PC-9 (cell line): ENCODE measurements at regions of chr6 and their contacts with region 1.

Region 1: GRCh38 chr6:52551401-52552277 is 25.2 kb downstream of the TRAM2 start:
- DNase-seq: peak; percentile 65 to 68
- H3K4me3 ChIP-seq: no peak overlapping the region
- H3K27ac ChIP-seq: no peak overlapping the region
- H3K4me1 ChIP-seq: 0 out of 2 replicates have a peak, but pooled peaks cover 8% of the 10 kb centered on the region
- H3K27me3 ChIP-seq: no peaks in the 10 kb centered on the region
- CTCF ChIP-seq: no peak

Region 2: GRCh38 chr6:52517502-52518278 is 33.9 kb before region 1 on chr6:
- CTCF ChIA-PET with region 1: no interaction called
- POLR2A ChIA-PET with region 1: no interaction called
- intact Hi-C with region 1: loop called (anchors 2 kb)
- DNase-seq: peak; percentile 71 to 76
- H3K4me3 ChIP-seq: no peak overlapping the region
- H3K27ac ChIP-seq: peak overlapping the region; percentile 42
- H3K4me1 ChIP-seq: peaks cover 42% of the 10 kb centered on the region
- H3K27me3 ChIP-seq: no peaks in the 10 kb centered on the region
- CTCF ChIP-seq: no peak

Region 3: GRCh38 chr6:52566853-52567279 is 15.2 kb after region 1 on chr6:
- CTCF ChIA-PET with region 1: interaction called, 7 read pairs
- POLR2A ChIA-PET with region 1: no interaction called
- intact Hi-C with region 1: loop called (anchors 2 kb)
- DNase-seq: peak; percentile 76 to 98
- H3K4me3 ChIP-seq: no peak overlapping the region
- H3K27ac ChIP-seq: peak overlapping the region; percentile 65
- H3K4me1 ChIP-seq: peaks cover 32% of the 10 kb centered on the region
- H3K27me3 ChIP-seq: no peaks in the 10 kb centered on the region
- CTCF ChIP-seq: no peak

Region 4: DNA sequence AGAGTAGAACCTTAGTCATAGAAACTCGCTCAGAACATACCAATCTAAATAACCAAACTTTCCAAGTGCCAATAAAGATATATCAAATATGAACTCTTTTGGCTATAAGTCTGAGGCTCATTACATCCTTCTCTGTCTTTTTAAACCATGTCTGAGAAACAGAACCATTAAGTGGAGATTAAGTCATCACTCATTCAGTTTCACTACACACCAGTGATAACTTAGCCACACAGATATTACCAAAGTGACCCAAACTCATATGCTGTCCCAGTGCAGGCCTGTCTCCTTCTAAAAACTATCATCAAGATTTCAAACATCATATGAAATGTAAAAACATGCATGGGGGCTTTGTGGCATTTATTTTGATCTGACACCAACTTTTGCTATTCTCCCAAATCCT is 981.3 kb after region 1 on chr6:
- CTCF ChIA-PET with region 1: no interaction called
- POLR2A ChIA-PET with region 1: interaction called, 12 read pairs
- intact Hi-C with region 1: no loop called
- DNase-seq: peak in 1 of 2 experiments; percentile 26
- H3K4me3 ChIP-seq: no peak overlapping the region
- H3K27ac ChIP-seq: 0 out of 2 replicates have a peak overlapping the region, but pooled peaks have one; percentile 7
- H3K4me1 ChIP-seq: peaks cover 21% of the 10 kb centered on the region; the same call in 1 of the 2 replicates
- H3K27me3 ChIP-seq: no peaks in the 10 kb centered on the region
- CTCF ChIP-seq: no peak

Region 5: GRCh38 chr6:53581173-53581773 is 1029.6 kb after region 1 on chr6:
- CTCF ChIA-PET with region 1: interaction called, 16 read pairs
- POLR2A ChIA-PET with region 1: no interaction called
- intact Hi-C with region 1: no loop called
- DNase-seq: no peak
- H3K4me3 ChIP-seq: no peak overlapping the region
- H3K27ac ChIP-seq: no peak overlapping the region
- H3K4me1 ChIP-seq: no peaks in the 10 kb centered on the region
- H3K27me3 ChIP-seq: no peaks in the 10 kb centered on the region
- CTCF ChIP-seq: no peak